ENCODE measurements at regions of chr3 and their contacts with region 1.

Region 1: GRCh38 chr3:177615015-177615414 is 417.7 kb upstream of the TBL1XR1 start:
- DNase-seq: peak; percentile 89

Region 2: DNA sequence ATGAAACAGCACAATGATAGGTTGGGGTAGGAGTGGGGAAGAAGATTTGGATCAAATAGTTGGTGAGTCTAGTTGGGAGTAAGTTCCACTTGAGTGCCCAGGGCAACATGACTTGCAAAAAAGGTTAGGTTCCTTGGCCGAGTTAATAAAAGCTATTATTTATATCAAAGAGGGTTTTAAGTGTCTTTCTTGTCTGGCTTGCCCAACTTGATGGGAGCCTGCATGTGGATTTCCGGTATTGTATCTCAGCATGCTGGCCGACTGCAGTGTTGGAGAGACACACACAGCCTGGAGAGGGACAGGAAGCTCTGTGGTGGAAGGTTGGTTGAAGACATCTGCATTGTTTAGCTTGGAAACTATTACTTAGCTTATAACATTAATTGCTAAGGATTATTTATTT is 31.7 kb after region 1 on chr3:
- intact Hi-C with region 1: loop called in 1 of 2 experiments (anchors 1 kb)
- DNase-seq: no peak

Region 3: GRCh38 chr3:177729956-177730681 is 115.1 kb after region 1 on chr3:
- intact Hi-C with region 1: no loop called
- DNase-seq: no peak

Region 4: GRCh38 chr3:177852001-177852816 is 237.2 kb after region 1 on chr3:
- intact Hi-C with region 1: no loop called
- DNase-seq: no peak

Region 5: GRCh38 chr3:177917234-177917861 is 302.3 kb after region 1 on chr3:
- intact Hi-C with region 1: no loop called
- DNase-seq: peak; percentile 55

Measured in posterior vena cava (tissue), 2 donors.